ENCODE measurements at regions of chr21 and their contacts with region 1.

Region 1: GRCh38 chr21:16211339-16212303 is 481.8 kb downstream of the USP25 start:
- DNase-seq: no peak
- H3K4me3 ChIP-seq: peak overlapping the region; percentile 21
- H3K27ac ChIP-seq: peak overlapping the region; percentile 61
- H3K4me1 ChIP-seq: peaks cover 52% of the 10 kb centered on the region
- H3K27me3 ChIP-seq: no peaks in the 10 kb centered on the region
- CTCF ChIP-seq: no peak

Region 2: GRCh38 chr21:15667010-15667409 is 544.6 kb before region 1 on chr21:
- intact Hi-C with region 1: no loop called
- DNase-seq: no peak
- H3K4me3 ChIP-seq: no peak overlapping the region
- H3K27ac ChIP-seq: no peak overlapping the region
- H3K4me1 ChIP-seq: no peaks in the 10 kb centered on the region
- H3K27me3 ChIP-seq: no peaks in the 10 kb centered on the region
- CTCF ChIP-seq: no peak

Region 3: GRCh38 chr21:15809818-15810217 is 401.8 kb before region 1 on chr21:
- intact Hi-C with region 1: no loop called
- DNase-seq: no peak
- H3K4me3 ChIP-seq: no peak overlapping the region
- H3K27ac ChIP-seq: no peak overlapping the region
- H3K4me1 ChIP-seq: no peaks in the 10 kb centered on the region
- H3K27me3 ChIP-seq: no peaks in the 10 kb centered on the region
- CTCF ChIP-seq: no peak

Region 4: GRCh38 chr21:16169102-16169511 is 42.5 kb before region 1 on chr21:
- intact Hi-C with region 1: no loop called
- DNase-seq: no peak
- H3K4me3 ChIP-seq: no peak overlapping the region
- H3K27ac ChIP-seq: no peak overlapping the region
- H3K4me1 ChIP-seq: no peaks in the 10 kb centered on the region
- H3K27me3 ChIP-seq: no peaks in the 10 kb centered on the region
- CTCF ChIP-seq: no peak

Region 5: GRCh38 chr21:16279731-16280581 is 68.3 kb after region 1 on chr21:
- intact Hi-C with region 1: loop called (anchors 10 kb)
- DNase-seq: peak; percentile 27
- H3K4me3 ChIP-seq: peak overlapping the region; percentile 52
- H3K27ac ChIP-seq: peak overlapping the region; percentile 69
- H3K4me1 ChIP-seq: peaks cover 15% of the 10 kb centered on the region
- H3K27me3 ChIP-seq: no peaks in the 10 kb centered on the region
- CTCF ChIP-seq: no peak

Region 6: DNA sequence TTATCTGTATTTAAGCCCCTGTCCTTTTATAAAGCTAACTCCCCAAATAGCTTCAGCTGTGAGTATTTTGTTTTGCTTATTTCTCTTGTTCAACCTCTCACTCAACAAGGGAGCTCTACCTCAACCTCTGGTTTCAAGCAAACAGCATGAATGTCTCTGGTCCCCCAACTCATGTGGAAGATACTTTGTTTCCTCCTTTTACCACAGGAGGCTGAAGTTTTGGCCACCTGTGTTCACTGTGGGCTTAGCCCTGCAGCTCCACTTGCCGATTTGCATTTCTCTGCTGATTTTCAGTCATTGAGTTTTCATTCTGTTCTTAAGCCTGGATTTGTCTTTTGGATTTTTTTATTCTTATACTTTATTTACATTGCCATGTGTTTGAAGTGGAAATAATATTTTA is 131.3 kb after region 1 on chr21:
- intact Hi-C with region 1: no loop called
- DNase-seq: no peak
- H3K4me3 ChIP-seq: no peak overlapping the region
- H3K27ac ChIP-seq: no peak overlapping the region
- H3K4me1 ChIP-seq: no peaks in the 10 kb centered on the region
- H3K27me3 ChIP-seq: no peaks in the 10 kb centered on the region
- CTCF ChIP-seq: no peak